ENCODE measurements at regions of chr14 and their contacts with region 1.

Region 1: DNA sequence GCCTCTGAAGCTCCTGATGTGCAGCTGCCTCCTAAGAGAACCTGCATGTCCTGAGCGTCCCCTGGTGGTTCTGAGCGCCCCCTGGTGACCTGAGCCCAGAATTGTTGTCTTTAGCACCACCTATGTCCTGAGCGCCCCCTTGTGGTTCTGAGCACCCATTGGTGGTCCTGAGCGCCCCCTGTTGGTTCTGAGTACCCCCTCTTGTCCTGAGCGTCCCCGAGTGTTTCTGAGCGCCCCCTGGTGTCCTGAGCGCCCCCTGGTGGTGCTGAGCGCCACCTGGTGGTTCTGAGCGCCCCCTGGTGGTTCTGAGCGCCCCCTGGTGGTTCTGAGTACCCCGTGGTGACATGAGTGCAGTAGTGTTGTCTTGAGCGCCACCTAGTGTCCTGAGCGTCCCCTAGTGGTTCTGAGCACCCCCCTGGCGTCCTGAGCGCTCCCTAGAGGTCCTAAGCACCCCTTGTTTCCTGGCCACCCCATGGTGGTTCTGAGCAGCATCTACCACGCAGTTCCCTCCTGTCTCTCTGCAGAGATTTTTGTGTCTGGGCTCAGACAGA is 782.5 kb downstream of the TMEM121 start:
- DNase-seq: peak; percentile 35
- ATAC-seq: peak; percentile 58; the same call in 2 of the 3 replicates
- H3K4me3 ChIP-seq: no peak overlapping the region
- H3K27ac ChIP-seq: no peak overlapping the region
- H3K4me1 ChIP-seq: no peaks in the 10 kb centered on the region
- H3K27me3 ChIP-seq: no peaks in the 10 kb centered on the region; a peak in 1 of 5 replicates
- CTCF ChIP-seq: peak; percentile 76
- EP300 ChIP-seq: no peak
- POLR2A ChIP-seq: no peak
- RAD21 ChIP-seq: no peak

Region 2: DNA sequence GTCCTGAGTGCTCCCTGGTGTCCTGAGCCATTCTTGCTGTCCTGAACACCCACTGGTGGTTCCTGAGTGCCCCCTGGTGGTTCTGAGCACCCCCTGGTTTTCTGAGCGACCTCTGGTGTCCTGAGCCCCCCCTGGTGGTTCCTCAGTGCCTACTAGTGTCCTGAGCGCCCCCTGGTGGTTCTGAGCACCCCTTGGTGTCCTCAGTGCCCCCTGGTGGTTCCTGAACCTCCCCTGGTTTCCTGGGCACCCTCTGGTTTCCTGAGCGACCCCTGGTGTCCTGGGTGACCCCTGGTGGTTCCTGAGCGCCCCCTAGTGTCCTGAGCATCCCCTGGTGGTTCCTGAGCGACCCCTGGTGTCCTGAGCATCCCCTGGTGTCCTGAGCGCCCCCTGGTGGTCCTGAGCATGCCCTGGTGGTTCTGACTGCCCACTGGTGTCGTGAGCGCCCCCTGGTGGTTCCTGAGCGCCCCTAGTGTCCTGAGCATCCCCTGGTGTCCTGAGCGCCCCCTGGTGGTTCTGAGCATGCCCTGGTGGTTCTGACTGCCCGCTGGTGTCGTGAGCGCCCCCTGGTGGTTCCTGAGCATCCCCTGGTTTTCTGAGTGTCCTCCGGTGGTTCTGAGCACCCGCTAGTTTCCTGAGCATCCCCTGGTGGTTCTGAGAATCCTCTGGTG is 309.4 kb before region 1 on chr14:
- CTCF ChIA-PET with region 1: interaction called, 19 read pairs
- POLR2A ChIA-PET with region 1: no interaction called
- in situ Hi-C with region 1: no loop called
- intact Hi-C with region 1: no loop called
- DNase-seq: peak; percentile 50
- ATAC-seq: no peak
- H3K4me3 ChIP-seq: no peak overlapping the region
- H3K27ac ChIP-seq: no peak overlapping the region
- H3K4me1 ChIP-seq: no peaks in the 10 kb centered on the region
- H3K27me3 ChIP-seq: no peaks in the 10 kb centered on the region; a peak in 1 of 5 replicates
- CTCF ChIP-seq: peak; percentile 31; the same call in 1 of the 2 replicates
- EP300 ChIP-seq: no peak
- POLR2A ChIP-seq: no peak
- RAD21 ChIP-seq: no peak

Region 3: DNA sequence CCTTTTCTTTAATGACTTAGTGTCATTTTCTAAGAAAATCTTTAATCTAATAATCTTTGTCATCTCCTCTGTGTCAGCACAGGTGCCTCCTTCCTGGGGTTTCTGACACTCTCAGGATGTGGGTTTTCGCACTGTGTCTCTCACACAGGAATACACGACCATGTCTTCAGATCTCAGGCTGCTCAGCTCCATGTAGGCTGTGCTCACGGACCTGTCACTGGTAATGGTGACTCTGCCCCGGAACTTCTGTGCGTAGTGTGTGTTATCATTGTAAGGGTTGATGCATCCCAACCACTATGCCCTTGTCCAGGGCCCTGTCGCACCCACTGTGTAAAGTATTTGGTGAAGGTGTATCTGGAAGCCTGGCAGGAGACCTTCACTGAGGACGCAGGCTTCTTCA is 134.7 kb before region 1 on chr14:
- CTCF ChIA-PET with region 1: interaction called, 13 read pairs
- POLR2A ChIA-PET with region 1: no interaction called
- in situ Hi-C with region 1: no loop called
- intact Hi-C with region 1: no loop called
- DNase-seq: no peak
- ATAC-seq: no peak
- H3K4me3 ChIP-seq: no peak overlapping the region
- H3K27ac ChIP-seq: no peak overlapping the region
- H3K4me1 ChIP-seq: no peaks in the 10 kb centered on the region
- H3K27me3 ChIP-seq: no peaks in the 10 kb centered on the region; a peak in 1 of 5 replicates
- CTCF ChIP-seq: no peak
- EP300 ChIP-seq: no peak
- POLR2A ChIP-seq: no peak
- RAD21 ChIP-seq: no peak

Region 4: GRCh38 chr14:106417224-106418049 is 108.5 kb after region 1 on chr14:
- CTCF ChIA-PET with region 1: interaction called, 17 read pairs
- POLR2A ChIA-PET with region 1: no interaction called
- in situ Hi-C with region 1: no loop called
- intact Hi-C with region 1: no loop called
- DNase-seq: peak; percentile 41
- ATAC-seq: peak; percentile 51
- H3K4me3 ChIP-seq: no peak overlapping the region
- H3K27ac ChIP-seq: no peak overlapping the region
- H3K4me1 ChIP-seq: no peaks in the 10 kb centered on the region
- H3K27me3 ChIP-seq: no peaks in the 10 kb centered on the region
- CTCF ChIP-seq: peak; percentile 62
- EP300 ChIP-seq: no peak
- POLR2A ChIP-seq: no peak
- RAD21 ChIP-seq: no peak